GM12878 (cell line): ENCODE measurements at regions of chr5 and their contacts with region 1.

Region 1: GRCh38 chr5:100992354-100992753 is 89.3 kb upstream of the ST8SIA4 start:
- DNase-seq: no peak
- ATAC-seq: peak; percentile 71
- H3K4me3 ChIP-seq: no peak overlapping the region
- H3K27ac ChIP-seq: no peak overlapping the region
- H3K4me1 ChIP-seq: no peaks in the 10 kb centered on the region
- H3K27me3 ChIP-seq: no peaks in the 10 kb centered on the region
- CTCF ChIP-seq: no peak
- EP300 ChIP-seq: no peak
- POLR2A ChIP-seq: no peak
- RAD21 ChIP-seq: no peak

Region 2: GRCh38 chr5:101009758-101010519 is 17.6 kb after region 1 on chr5:
- CTCF ChIA-PET with region 1: interaction called, 4 read pairs
- POLR2A ChIA-PET with region 1: no interaction called
- RAD21 ChIA-PET with region 1: interaction called, 3 read pairs
- SMC1A ChIA-PET with region 1: interaction called, 10 read pairs
- in situ Hi-C with region 1: no loop called
- intact Hi-C with region 1: no loop called
- DNase-seq: peak; percentile 39
- ATAC-seq: peak; percentile 94
- H3K4me3 ChIP-seq: no peak overlapping the region
- H3K27ac ChIP-seq: peak overlapping the region; percentile 50; the same call in 1 of the 2 replicates
- H3K4me1 ChIP-seq: peaks cover 8% of the 10 kb centered on the region
- H3K27me3 ChIP-seq: no peaks in the 10 kb centered on the region
- CTCF ChIP-seq: no peak
- EP300 ChIP-seq: 0 out of 4 replicates have a peak, but pooled peaks of 1 of the 2 experiments have one; percentile 27
- POLR2A ChIP-seq: no peak
- RAD21 ChIP-seq: no peak